ENCODE measurements at regions of chr15 and their contacts with region 1.

Region 1: DNA sequence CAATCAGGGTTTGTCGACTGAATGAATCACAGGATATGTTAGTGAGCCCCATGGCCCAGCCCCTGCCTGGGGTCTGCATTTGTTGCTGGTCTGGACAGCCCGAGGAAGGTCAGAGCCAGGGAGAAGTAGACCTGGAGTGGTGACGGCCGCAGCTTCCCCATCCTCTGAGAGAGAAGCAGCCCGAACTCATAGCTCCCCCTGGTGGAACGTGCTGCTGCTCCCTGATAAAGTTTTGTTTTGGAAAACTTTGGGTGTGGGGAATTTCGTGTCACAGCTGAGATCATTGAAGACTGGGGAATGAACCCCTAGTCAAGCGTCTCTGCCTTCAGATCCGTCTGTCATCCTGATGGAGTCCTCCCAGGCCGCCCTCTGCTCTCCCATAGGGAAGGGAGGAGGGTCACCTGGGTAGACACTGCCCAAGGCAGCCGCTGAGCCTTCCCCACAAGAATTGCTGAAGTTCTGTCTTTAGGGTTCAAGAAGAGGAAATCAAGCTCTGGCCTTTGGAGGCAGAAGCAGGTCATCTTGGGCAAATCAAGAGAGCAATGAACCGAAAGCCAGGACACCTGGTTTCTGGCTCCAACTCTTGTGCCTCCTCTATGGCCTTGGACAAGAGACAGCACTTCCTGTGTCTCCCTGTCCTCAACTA is 60.5 kb downstream of the GLDN start:
- DNase-seq: no peak
- ATAC-seq: peak in 1 of 2 donors; percentile 53

Region 2: GRCh38 chr15:50865515-50866353 is 536.3 kb before region 1 on chr15:
- intact Hi-C with region 1: no loop called
- DNase-seq: no peak
- ATAC-seq: no peak

Region 3: DNA sequence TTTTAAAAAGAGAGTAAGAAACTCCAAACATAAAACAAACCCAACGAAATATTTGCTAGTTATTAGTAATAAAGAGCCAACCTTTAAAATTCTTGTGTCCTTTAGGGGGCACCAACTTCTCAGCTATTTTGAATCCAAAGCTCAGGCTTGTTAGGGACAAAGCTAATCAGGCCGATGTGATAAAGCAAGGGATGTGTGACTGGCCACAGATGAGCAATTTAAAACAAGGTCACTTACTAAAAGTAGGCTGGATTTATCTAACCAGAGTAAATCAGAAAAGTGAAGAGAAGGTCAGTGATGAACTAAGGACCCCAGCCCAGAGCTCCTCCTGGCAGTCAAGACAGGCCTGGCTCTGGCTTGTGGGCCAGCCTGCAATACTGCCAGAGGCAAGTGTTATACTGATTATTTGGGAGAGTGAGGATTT is 172.1 kb before region 1 on chr15:
- intact Hi-C with region 1: loop called in 1 of 2 experiments (anchors 5 kb)
- DNase-seq: no peak
- ATAC-seq: peak; percentile 57 to 85